GM12878 (cell line): ENCODE measurements at regions of chr22 and their contacts with region 1.

Region 1: DNA sequence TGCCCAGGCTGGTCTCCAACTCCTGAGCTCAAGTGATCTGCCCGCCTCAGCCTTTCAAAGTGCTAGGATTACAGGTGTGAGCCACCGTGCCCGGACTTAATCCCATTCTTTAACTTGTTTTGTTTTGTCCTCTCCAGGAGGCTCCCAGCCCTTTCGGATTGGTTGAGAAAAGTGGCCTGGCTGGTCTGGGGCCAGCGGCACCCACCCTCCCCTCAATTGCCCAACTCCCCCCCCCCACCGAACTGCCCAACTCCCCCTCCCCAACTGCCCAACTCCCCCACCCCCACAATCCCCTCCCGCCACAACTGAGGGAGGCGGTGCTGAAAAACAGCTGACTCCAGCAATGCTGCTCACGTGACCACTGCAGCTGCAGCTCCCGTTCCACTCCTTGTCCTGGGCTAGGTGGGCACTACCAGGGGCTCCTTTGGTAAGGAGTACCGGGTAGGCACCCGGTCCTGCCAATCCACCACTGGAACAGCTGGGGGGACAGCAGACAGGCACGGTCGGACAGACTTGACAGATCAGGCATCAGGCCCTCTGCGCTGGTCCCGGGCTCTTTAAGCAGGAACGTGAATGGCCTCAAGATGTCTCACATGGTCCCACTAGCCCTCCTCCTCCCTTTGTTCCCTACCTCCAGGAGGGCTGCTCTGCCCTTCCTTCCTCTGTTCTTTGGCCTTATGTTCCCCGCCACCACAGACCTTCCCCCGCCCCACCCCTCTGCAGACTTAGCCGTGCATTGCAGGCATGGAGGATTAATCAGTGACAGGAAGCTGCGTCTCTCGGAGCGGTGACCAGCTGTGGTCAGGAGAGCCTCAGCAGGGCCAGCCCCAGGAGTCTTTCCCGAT is at the start of gene TCN2:
- DNase-seq: no peak
- ATAC-seq: peak; percentile 79
- H3K4me3 ChIP-seq: peak within 1 kb of the TSS; percentile 66
- H3K27ac ChIP-seq: peak within 1 kb of the TSS; percentile 54
- H3K4me1 ChIP-seq: peaks cover 51% of the 10 kb centered on the region
- H3K27me3 ChIP-seq: no peaks in the 10 kb centered on the region
- CTCF ChIP-seq: 0 out of 6 replicates have a peak, but pooled peaks of 1 of the 3 experiments have one; percentile 12
- EP300 ChIP-seq: no peak
- POLR2A ChIP-seq: peak; percentile 62; the same call in 1 of the 2 replicates
- RAD21 ChIP-seq: no peak
- polyA plus RNA-seq, gene TCN2: 15.9 to 21.8 TPM

Region 2: DNA sequence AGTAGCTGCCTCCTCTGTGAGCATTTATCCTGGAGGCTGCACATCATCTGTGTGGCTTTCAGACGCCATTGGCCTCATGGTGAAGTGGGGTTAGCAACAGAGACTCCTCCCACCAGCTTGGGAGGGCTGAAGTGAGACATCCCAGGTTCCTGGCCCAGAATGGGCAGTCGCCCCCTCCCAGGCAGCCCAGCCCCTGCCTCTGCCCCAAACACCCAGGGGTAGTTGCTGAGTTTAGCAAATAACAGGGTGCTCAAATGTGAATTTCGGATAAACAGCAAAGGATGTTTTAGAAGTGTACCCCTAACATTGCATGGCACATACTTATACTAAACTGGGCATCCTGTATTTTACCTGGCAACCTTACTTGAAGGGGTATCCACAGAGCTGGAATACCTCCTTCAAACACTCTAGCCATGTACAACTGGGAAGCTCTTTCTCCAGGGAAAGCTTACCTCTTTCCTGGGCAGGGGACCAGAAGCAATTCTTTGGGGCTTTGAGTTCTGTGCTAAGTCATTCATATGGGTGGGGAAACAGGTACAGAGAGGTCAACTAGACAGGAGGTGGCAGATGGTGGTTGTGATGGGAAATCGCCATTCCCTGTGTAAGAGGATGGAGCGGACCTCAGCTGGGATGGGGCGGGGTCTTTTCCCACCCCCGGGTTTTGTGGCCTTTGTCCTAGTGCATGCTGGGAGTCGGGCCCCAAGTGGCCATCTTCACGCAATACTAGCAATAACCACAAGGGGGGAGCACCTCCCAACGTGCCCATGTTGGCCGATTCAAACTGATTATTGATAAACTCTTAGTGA is 161.8 kb before region 1 on chr22:
- CTCF ChIA-PET with region 1: interaction called, 5 read pairs
- POLR2A ChIA-PET with region 1: interaction called, 3 read pairs
- RAD21 ChIA-PET with region 1: interaction called, 5 read pairs
- SMC1A ChIA-PET with region 1: interaction called, 5 read pairs
- in situ Hi-C with region 1: no loop called
- intact Hi-C with region 1: loop called (anchors 5 kb)
- DNase-seq: no peak
- ATAC-seq: peak; percentile 78
- H3K4me3 ChIP-seq: no peak overlapping the region
- H3K27ac ChIP-seq: no peak overlapping the region
- H3K4me1 ChIP-seq: peaks cover 11% of the 10 kb centered on the region
- H3K27me3 ChIP-seq: no peaks in the 10 kb centered on the region
- CTCF ChIP-seq: peak; percentile 74 to 81 (median 78)
- EP300 ChIP-seq: no peak
- POLR2A ChIP-seq: peak; percentile 60
- RAD21 ChIP-seq: peak; percentile 80

Region 3: DNA sequence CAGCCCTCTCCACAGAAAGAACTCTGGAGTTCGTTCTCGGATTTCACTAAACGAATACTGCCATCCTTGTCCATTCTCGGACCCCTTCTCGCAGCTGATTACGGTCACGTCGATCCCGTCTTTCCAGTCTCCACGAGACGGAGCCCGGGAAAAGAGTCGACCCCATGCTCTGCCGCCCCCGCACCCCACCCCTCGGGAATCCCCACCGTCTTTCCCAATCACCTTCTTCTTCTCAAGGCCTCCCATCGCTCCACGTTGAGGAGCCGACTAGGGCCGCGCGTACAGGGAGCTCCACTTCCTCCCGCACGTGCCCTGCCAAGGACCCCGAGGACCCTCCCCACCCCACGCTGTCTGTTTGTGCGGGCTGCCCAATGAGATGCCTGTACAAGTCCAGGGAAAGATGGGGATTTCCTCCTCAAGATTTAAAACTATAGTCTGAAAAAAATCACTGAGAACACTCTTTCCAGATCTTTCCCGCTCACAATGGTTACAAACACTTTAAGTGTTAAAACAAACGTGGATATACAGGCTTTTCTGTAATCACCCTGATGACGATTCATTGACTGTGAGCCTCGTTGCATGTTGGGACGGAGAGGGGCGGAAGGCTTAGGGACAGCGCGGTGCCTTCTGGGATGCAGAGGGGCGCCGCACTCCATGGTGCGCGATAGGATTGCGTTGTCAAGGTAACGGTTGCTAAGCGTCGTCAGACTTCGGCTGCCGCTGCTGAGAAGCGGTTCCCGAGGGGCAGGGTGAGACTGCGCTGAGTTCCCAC is 14.9 kb before region 1 on chr22 and contains the start of gene PES1:
- CTCF ChIA-PET with region 1: interaction called, 45 read pairs
- POLR2A ChIA-PET with region 1: interaction called, 7 read pairs
- RAD21 ChIA-PET with region 1: interaction called, 7 read pairs
- SMC1A ChIA-PET with region 1: interaction called, 5 read pairs
- in situ Hi-C with region 1: no loop called
- intact Hi-C with region 1: no loop called
- DNase-seq: peak; percentile 97
- ATAC-seq: peak; percentile 100
- H3K4me3 ChIP-seq: peak within 1 kb of the TSS; percentile 97
- H3K27ac ChIP-seq: peak within 1 kb of the TSS; percentile 91
- H3K4me1 ChIP-seq: no peaks in the 10 kb centered on the region
- H3K27me3 ChIP-seq: no peaks in the 10 kb centered on the region
- CTCF ChIP-seq: no peak
- EP300 ChIP-seq: peak in 1 of 2 experiments; percentile 38; a peak in 1 of 4 replicates
- POLR2A ChIP-seq: peak; percentile 83
- RAD21 ChIP-seq: no peak
- polyA plus RNA-seq, gene PES1: 6.9 to 7.8 TPM